Posterior vena cava (tissue), 2 donors: ENCODE measurements at regions of chr1 and their contacts with region 1.

Region 1: DNA sequence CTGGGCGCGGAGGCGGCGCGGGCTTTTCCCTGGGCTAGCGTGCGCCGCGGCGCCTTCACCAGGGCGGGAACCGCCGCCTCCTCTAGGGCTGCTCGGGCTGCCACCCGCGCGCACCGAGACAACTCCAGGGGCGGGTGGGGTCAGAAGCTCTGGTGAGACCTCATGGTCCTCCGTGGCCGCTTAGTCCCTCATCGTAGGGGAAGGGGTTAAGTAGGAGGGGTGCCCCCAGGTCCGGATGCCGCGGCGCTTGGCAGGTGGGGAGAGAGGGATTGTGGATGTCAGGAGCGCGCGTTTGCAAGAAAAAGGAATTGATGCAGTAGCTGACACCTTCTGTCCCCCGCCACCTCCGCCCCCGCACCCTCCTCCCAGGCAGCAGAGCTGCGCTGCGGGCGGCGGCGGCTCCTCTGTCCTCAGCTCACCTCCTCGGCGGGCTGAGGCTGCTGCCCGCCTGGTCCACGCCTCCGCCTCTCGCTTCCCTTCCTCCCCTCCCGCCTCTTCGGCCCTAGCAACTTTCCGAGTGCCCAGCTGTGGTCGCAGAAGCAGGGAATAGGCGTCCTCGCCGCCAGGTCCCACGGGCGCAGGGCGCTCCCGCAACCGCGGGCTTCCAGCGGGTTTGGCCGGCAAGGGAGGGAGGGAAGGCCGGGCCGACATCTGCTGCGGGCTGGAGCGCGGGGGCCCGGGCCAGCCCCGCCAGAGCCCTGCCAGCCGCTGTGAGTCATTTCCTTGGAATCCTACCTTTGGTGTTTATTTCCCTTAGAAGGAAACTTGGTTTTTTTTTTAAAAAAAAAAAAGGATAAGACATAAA is 822 bp downstream of the SERTAD4 start:
- DNase-seq: no peak

Region 2: DNA sequence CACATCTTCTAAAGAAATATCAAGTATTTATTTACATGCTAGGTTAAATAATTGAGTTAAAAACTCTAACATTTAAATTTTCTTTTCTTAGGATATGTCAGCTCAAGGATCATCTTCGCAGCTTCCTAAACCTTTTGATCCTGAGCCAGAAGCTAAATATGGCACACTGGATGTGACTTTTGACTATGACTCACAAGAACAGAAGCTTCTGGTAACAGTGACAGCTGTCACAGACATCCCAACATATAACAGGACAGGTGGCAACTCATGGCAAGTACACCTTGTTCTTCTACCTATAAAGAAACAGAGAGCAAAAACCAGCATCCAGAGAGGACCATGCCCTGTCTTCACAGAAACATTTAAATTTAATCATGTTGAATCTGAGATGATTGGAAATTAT is 133.5 kb before region 1 on chr1:
- intact Hi-C with region 1: no loop called
- DNase-seq: no peak

Region 3: DNA sequence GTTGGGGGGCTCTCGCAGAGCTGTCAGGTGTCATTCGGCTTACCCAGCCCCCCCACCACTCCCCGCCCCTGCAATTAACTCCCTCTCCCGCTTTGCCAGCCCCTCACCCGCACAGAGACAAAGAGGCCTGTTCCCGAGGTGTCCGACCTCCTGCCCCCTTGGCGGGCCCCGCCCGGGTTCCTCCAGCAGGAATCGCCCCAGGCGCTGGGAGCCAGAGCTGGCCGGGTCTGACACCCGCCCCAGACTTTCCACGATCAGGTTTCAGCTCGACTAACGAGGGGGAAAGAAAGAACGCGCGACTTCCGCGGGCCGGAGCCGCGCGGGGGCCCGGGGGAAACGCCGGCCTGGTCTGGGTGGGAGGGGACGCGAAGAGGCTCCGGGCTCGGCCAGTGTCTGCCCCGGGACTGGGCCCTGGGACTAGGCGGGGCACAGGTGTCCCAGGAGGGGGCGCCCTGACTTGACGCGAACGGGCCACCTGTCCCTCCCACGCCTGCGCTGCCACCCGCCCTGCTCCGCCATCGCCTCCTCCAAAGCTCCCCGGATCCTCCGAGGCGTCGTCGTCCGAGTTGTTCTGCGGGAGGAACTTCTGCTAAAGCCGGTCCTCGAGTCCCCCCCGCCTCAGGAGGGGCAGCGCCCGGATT is 58.9 kb after region 1 on chr1:
- intact Hi-C with region 1: loop called in 1 of 2 experiments (anchors 10 kb)
- DNase-seq: peak; percentile 86